HCT116 (cell line): ENCODE measurements at regions of chr6 and their contacts with region 1.

Region 1: DNA sequence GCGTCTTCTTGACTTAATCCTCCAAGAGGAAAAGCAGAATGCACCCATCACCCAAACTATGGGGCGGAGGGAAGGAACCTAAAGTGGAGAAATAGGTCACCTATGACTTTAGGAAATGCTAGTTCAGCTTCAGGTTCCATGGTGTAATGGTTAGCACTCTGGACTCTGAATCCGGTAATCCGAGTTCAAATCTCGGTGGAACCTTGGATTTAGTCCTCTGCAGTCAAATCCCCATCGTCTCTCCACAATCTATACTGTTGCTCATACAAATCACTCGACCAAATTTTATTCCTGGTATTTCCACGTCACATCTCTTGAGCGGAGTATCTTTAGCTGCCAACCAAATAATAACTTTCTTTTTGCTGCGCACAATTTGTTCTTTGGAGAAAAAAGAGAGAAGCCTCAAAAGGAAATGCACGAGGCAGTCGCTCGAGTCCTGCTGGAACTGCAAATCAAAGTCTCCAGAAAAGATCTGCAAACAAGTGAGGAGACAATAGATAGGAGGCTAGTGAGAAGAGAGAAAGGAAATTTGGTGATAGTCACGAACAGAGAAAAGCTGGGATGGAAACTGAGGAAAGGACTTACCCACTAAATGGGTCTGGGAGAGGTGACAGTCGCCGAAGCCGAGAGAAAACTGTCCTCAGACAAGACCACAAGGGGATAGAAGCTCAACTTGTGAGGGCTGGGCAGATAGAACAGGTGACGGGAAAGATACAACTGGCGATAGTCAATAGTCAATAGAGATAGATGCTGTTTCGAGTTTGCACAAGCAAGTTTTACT is 16.6 kb downstream of the POM121L2 start:
- DNase-seq: peak; percentile 90
- ATAC-seq: peak; percentile 84
- H3K4me3 ChIP-seq: peak overlapping the region; percentile 51 to 72
- H3K27ac ChIP-seq: peak overlapping the region; percentile 64
- H3K4me1 ChIP-seq: peaks cover 8 to 24% of the 10 kb centered on the region in 2 experiments
- H3K27me3 ChIP-seq: no peaks in the 10 kb centered on the region
- CTCF ChIP-seq: no peak
- POLR2A ChIP-seq: no peak
- RAD21 ChIP-seq: no peak

Region 2: GRCh38 chr6:26596579-26597388 is 698.7 kb before region 1 on chr6 and contains the start of gene ABT1:
- CTCF ChIA-PET with region 1: no interaction called
- POLR2A ChIA-PET with region 1: no interaction called
- RAD21 ChIA-PET with region 1: no interaction called
- intact Hi-C with region 1: loop called (anchors 1 kb)
- DNase-seq: peak; percentile 97
- ATAC-seq: peak; percentile 74
- H3K4me3 ChIP-seq: peak within 1 kb of the TSS; percentile 94 to 98
- H3K27ac ChIP-seq: peak within 1 kb of the TSS; percentile 80
- H3K4me1 ChIP-seq: peaks cover 19 to 43% of the 10 kb centered on the region in 2 experiments
- H3K27me3 ChIP-seq: no peaks in the 10 kb centered on the region
- CTCF ChIP-seq: no peak
- POLR2A ChIP-seq: peak; percentile 80
- RAD21 ChIP-seq: no peak; the same call in 1 of the 2 replicates
- total RNA-seq, gene ABT1: 26.7 TPM

Region 3: DNA sequence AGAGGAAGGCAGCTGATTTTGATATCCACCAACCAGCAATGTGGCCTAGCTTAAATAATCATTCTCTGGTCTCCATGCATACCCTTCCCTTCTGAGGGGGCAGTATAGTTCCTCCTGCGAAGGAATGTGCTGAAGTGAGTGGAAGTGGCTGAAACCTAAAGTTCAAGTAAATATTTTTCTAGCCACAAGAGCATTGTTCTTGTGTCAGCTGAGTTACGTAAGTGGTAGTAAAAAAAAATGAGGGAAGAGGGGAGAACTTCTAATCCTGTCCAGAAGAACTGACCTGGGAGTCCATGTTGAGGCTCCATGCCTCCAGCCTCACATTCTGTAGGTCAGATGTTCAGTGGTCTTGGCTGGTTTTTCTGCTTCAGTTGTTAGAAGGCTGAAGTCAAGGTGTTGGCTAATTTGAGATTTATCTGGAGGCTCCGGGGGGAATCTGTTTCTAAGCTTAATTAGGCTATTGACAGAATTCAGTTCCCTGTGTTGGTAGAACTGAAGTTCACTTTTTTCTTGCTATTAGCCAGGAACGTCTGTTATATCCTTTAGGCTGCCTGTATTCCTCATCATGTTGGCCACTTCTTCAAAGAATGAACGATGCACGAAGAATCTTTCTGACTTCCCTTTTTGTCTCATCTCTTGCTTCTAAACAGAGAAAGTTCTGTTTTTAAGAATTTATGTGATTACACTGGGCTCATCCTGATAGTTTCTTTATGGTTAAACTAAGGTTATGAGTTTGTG is 255.1 kb before region 1 on chr6:
- CTCF ChIA-PET with region 1: no interaction called
- POLR2A ChIA-PET with region 1: no interaction called
- RAD21 ChIA-PET with region 1: no interaction called
- intact Hi-C with region 1: no loop called
- DNase-seq: no peak
- ATAC-seq: no peak
- H3K4me3 ChIP-seq: no peak overlapping the region
- H3K27ac ChIP-seq: no peak overlapping the region
- H3K4me1 ChIP-seq: no peaks in the 10 kb centered on the region
- H3K27me3 ChIP-seq: no peaks in the 10 kb centered on the region
- CTCF ChIP-seq: no peak
- POLR2A ChIP-seq: no peak
- RAD21 ChIP-seq: no peak

Region 4: GRCh38 chr6:27260369-27260768 is 35.1 kb before region 1 on chr6:
- CTCF ChIA-PET with region 1: no interaction called
- POLR2A ChIA-PET with region 1: no interaction called
- RAD21 ChIA-PET with region 1: no interaction called
- intact Hi-C with region 1: no loop called
- DNase-seq: no peak
- ATAC-seq: no peak
- H3K4me3 ChIP-seq: no peak overlapping the region
- H3K27ac ChIP-seq: no peak overlapping the region
- H3K4me1 ChIP-seq: no peaks in the 10 kb centered on the region
- H3K27me3 ChIP-seq: no peaks in the 10 kb centered on the region
- CTCF ChIP-seq: no peak
- POLR2A ChIP-seq: no peak
- RAD21 ChIP-seq: no peak

Region 5: DNA sequence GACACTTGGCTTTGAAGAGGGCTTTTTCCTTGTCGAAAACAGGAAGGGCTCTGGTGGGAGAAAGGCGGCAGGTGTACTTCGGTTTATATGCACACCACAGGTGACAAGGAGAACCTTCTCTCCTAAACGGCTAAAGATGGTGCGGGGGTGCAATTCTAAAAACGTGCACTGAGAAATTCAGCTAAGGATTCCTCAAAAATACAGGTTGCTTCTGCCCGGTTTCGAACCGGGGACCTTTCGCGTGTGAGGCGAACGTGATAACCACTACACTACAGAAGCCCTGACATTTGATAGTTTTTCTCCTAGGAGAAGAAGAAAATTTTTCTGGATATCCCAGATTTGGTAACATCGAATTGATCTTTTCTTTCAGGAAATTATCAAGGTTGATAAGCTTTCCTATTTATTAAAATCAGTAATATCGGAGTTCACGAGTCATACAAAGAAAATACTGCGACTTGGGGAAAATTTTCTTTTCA is 15.4 kb before region 1 on chr6:
- CTCF ChIA-PET with region 1: no interaction called
- POLR2A ChIA-PET with region 1: interaction called, 4 read pairs
- RAD21 ChIA-PET with region 1: no interaction called
- intact Hi-C with region 1: loop called (anchors 1 kb)
- DNase-seq: peak; percentile 45
- ATAC-seq: peak; percentile 81
- H3K4me3 ChIP-seq: peak overlapping the region; percentile 40 to 54
- H3K27ac ChIP-seq: peak overlapping the region; percentile 61; the same call in 1 of the 2 replicates
- H3K4me1 ChIP-seq: peaks cover 3 to 17% of the 10 kb centered on the region in 2 experiments; a peak in 3 of 4 replicates
- H3K27me3 ChIP-seq: no peaks in the 10 kb centered on the region
- CTCF ChIP-seq: no peak
- POLR2A ChIP-seq: no peak
- RAD21 ChIP-seq: no peak

Region 6: DNA sequence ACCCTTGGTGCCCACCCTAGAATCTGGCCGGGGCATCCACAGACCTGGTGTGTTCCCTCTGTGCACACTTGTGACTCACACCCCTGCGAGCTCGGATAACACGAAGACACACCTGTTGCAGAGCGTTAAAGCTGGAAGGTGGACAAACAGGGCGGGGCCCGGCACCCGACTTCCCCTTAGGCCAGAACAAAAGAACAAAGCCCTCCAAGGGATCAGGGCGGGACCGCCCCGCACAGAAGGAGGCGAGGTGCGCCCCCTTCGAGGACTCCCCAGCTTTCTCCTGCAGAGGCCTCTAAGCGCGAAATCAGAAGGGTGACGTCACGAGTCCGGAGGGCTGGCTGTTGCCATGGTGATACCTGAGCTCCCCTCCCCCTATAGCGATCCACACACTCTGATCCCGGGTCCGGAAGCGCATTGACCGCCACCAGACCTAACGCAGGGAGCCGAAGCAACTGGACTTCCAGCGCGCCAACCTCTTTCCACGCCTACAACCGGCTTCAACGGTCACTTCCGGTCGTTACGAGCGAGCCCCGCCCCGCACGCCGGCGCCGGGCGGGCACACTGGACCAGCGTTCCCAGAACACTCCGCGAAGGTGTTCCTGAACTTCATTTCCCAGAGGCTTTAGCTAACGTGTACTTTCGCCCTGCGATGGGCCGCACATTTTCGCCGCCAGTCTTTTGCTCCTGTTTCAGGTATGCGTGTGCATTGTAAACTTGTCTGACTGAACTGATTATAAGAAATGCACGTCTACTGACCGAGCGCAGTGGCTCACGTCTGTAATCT is 177.3 kb after region 1 on chr6 and contains the start of gene ZNF184:
- CTCF ChIA-PET with region 1: no interaction called
- POLR2A ChIA-PET with region 1: interaction called, 7 read pairs
- RAD21 ChIA-PET with region 1: no interaction called
- intact Hi-C with region 1: loop called (anchors 5 kb)
- DNase-seq: peak; percentile 98
- ATAC-seq: peak; percentile 92
- H3K4me3 ChIP-seq: peak within 1 kb of the TSS; percentile 68 to 75
- H3K27ac ChIP-seq: peak within 1 kb of the TSS; percentile 88
- H3K4me1 ChIP-seq: peaks cover 2 to 28% of the 10 kb centered on the region in 2 experiments; a peak in 3 of 4 replicates
- H3K27me3 ChIP-seq: no peaks in the 10 kb centered on the region
- CTCF ChIP-seq: no peak
- POLR2A ChIP-seq: peak; percentile 77
- RAD21 ChIP-seq: no peak
- total RNA-seq, gene ZNF184: 9.4 TPM

Region 7: GRCh38 chr6:27592481-27593199 is 297.1 kb after region 1 on chr6:
- CTCF ChIA-PET with region 1: no interaction called
- POLR2A ChIA-PET with region 1: no interaction called
- RAD21 ChIA-PET with region 1: no interaction called
- intact Hi-C with region 1: no loop called
- DNase-seq: no peak
- ATAC-seq: peak; percentile 88
- H3K4me3 ChIP-seq: no peak overlapping the region
- H3K27ac ChIP-seq: no peak overlapping the region
- H3K4me1 ChIP-seq: peaks cover 7 to 30% of the 10 kb centered on the region in 2 experiments
- H3K27me3 ChIP-seq: no peaks in the 10 kb centered on the region
- CTCF ChIP-seq: no peak
- POLR2A ChIP-seq: no peak
- RAD21 ChIP-seq: peak; percentile 8; the same call in 1 of the 2 replicates

Region 8: DNA sequence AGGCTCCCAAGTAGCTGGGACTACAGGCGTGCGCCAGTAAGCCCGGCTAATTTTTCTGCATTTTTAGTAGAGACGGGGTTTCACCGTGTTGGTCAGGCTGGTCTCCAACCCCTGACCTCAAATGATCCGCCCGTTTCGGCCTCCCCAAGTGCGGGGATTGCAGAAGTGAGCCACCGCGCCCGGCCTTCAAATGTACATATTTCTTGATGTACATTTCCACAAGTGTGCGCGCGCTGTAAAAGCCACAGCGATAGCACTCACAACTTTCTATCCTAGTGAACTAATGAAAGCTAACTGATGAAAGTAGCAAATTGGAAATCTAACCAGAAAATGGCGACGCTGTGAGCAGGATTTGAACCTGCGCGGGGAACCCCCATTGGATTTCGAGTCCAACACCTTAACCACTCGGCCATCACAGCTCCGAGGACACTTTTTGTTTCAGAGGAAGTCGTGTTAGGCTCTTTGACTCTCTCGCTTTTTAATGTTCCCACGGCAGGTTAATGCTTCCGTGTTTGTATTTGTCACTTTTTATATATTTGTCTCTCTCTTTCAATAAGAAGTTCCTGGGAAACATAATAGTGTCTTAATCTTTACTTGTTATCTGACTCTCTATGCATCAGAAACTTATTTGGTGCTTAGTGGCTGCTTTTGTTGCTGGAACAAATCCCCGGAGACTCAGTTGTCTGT is 376.8 kb after region 1 on chr6:
- CTCF ChIA-PET with region 1: no interaction called
- POLR2A ChIA-PET with region 1: no interaction called
- RAD21 ChIA-PET with region 1: no interaction called
- intact Hi-C with region 1: loop called (anchors 10 kb)
- DNase-seq: peak; percentile 90
- ATAC-seq: peak; percentile 76
- H3K4me3 ChIP-seq: peak overlapping the region; percentile 17 to 51
- H3K27ac ChIP-seq: peak overlapping the region; percentile 67
- H3K4me1 ChIP-seq: peaks cover 17 to 42% of the 10 kb centered on the region in 2 experiments; a peak in 3 of 4 replicates
- H3K27me3 ChIP-seq: no peaks in the 10 kb centered on the region
- CTCF ChIP-seq: no peak
- POLR2A ChIP-seq: no peak
- RAD21 ChIP-seq: no peak; the same call in 1 of the 2 replicates